Activated T-helper 2 cell treated with anti-CD3 and anti-CD28 coated beads, Interferon-gamma antibody, Interleukin-2, Interleukin-4, amounts not matched to agents 10 μg/mL and 5 μg/mL and 100 μg/mL, durations not matched to agents 14 hours and 24 hours and 36 hours (primary cell): ENCODE measurements at regions of chr6 and their contacts with region 1.

Region 1: DNA sequence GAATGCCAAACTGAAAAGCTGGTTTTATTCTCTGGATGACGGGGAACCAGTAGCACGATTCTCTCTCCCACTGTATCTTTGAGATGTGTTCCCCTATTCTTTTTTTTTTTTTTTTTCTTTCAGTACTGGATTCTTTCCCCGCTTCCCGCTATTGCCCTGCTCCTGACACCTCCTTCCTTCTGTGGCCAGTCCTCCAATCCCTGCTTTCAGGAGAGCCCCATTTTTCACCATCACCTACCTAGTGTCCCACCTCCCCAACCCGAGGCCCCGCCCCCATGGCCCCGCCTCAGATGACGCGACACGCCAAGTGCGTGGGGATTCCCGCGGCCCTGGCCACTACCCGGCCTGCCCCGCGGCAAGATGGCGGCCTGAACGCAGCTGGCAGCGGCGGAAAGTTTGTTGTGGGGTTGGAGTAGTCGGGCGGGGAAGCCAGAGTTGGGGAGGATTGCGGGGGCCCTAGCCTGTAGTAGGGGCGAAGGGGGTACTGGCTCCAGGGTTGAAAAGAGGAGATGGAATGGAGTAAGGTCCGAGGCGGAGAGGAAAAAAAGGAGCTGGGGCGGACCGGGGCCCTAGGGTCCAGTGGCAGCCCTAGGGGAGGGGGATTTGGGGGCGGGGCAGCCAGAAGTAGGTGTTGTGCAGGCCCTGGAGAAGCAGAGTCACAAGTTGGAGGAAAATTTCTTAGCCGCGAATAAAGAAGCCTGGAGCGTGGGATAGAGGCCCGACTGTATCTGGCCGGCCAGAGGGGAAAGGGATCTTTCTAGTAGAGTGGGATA is at the start of gene TJAP1:
- DNase-seq: peak; percentile 92
- H3K4me3 Mint-ChIP-seq: peak within 1 kb of the TSS; percentile 95
- H3K27ac Mint-ChIP-seq: peak within 1 kb of the TSS; percentile 89
- H3K4me1 Mint-ChIP-seq: peaks cover 43% of the 10 kb centered on the region
- H3K27me3 Mint-ChIP-seq: no peaks in the 10 kb centered on the region
- total RNA-seq, gene TJAP1: 36.0 and 42.7 TPM in 2 replicates

Region 2: DNA sequence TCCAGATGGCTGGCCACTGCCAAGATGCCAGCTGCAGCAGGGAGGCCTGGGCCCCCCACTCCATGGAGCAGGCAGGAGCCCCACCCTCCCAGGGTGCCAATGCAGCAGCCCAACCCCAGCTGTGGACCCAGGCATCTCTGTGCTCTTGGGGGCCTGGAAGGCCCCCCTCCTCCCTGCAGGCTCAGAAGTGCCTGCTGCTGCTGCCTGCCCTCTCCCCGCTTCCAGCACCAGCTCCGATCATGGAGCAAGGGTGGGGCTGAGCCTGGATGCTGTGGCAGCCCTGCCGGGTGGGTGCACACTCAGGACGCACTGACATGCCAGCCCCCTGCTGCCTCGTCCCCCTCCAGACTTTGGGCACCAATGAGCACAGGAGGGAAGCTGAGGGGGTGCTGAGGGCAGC is 64.9 kb before region 1 on chr6:
- intact Hi-C with region 1: no loop called
- DNase-seq: no peak
- H3K4me3 Mint-ChIP-seq: no peak overlapping the region
- H3K27ac Mint-ChIP-seq: no peak overlapping the region
- H3K4me1 Mint-ChIP-seq: no peaks in the 10 kb centered on the region
- H3K27me3 Mint-ChIP-seq: peaks cover 17% of the 10 kb centered on the region

Region 3: DNA sequence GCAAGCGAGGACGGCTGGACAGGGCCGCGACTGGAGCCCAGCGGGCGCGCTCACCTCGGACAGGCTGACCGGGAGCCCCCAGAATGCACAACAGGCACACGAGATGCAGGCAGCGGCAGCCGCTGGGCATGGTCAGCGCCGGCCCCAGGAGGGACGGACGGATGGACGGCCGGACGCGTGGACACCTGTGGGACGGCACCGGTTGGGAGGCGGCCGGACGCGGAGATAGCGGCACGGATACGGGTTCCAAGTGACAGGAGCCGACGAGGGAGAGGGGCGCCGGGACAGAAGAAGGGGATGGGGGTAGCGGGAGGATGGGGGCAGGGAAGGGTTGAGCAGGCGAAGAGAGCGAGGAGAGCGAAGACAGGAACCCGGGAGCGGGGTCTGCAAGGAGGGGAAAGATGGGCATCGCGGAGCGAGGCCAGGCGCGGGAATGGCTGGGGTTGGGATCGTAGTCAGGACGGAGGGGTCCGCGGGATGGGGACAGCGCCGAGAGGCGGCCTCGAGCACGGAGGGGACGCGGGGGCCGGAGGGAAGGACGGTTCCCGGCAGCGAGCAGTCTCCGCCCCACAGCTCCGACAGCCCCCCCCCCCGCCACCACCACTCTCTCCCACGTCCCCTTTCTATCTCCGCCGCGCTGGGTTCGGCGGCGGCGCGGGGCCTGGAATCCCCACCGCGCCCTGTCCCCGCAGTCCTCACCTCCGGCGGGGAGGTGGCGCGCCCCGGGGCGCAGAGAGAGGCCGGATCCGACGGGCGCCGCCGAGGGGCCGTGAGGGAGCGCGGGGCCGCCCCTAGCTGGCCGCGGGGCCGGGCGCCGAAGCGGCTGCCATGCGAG is 22.5 kb before region 1 on chr6:
- intact Hi-C with region 1: loop called (anchors 1 kb)
- DNase-seq: no peak
- H3K4me3 Mint-ChIP-seq: peak overlapping the region; percentile 72
- H3K27ac Mint-ChIP-seq: no peak overlapping the region
- H3K4me1 Mint-ChIP-seq: peaks cover 7% of the 10 kb centered on the region
- H3K27me3 Mint-ChIP-seq: peaks cover 24% of the 10 kb centered on the region